Activated CD8-positive, alpha-beta T cell treated with anti-CD3 and anti-CD28 coated beads, Interleukin-2, amount 10 ng/mL, durations not matched to agents 7 days and 5 days (primary cell): ENCODE measurements at regions of chr18 and their contacts with region 1.

Region 1: GRCh38 chr18:658001-658946 is 821 bp downstream of the TYMS start:
- DNase-seq: peak; percentile 88
- ATAC-seq: peak; percentile 73
- H3K4me3 Mint-ChIP-seq: peak overlapping the region; percentile 99
- H3K27ac Mint-ChIP-seq: peak overlapping the region; percentile 94
- H3K4me1 Mint-ChIP-seq: peaks cover 52% of the 10 kb centered on the region
- H3K27me3 Mint-ChIP-seq: no peaks in the 10 kb centered on the region

Region 2: GRCh38 chr18:267688-268552 is 390.4 kb before region 1 on chr18 and contains the start of gene THOC1:
- CTCF ChIA-PET with region 1: interaction called, 3 read pairs
- POLR2A ChIA-PET with region 1: interaction called, 17 read pairs
- DNase-seq: peak; percentile 96
- ATAC-seq: peak; percentile 92
- H3K4me3 Mint-ChIP-seq: peak within 1 kb of the TSS; percentile 99
- H3K27ac Mint-ChIP-seq: peak within 1 kb of the TSS; percentile 100
- H3K4me1 Mint-ChIP-seq: peaks cover 26% of the 10 kb centered on the region
- H3K27me3 Mint-ChIP-seq: no peaks in the 10 kb centered on the region
- total RNA-seq, gene THOC1: 43.6 to 49.4 TPM

Region 3: DNA sequence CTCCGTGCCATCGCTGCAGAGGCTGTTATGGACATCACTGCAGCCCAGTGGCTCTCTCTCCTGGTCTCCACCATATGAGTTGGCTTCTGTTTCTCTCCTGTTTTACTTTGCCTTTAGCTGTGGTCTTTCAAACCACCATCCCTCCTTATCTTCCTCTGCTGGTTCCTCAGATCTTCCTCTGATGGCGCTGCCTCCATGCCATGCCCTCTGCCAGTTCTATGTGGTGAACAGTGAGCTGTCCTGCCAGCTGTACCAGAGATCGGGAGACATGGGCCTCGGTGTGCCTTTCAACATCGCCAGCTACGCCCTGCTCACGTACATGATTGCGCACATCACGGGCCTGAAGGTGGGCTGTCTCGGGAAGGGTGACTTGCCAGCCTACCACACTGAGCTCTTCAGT is 12.2 kb after region 1 on chr18:
- CTCF ChIA-PET with region 1: interaction called, 4 read pairs
- POLR2A ChIA-PET with region 1: interaction called, 13 read pairs
- DNase-seq: no peak
- ATAC-seq: no peak
- H3K4me3 Mint-ChIP-seq: no peak overlapping the region
- H3K27ac Mint-ChIP-seq: peak overlapping the region; percentile 3
- H3K4me1 Mint-ChIP-seq: peaks cover 17% of the 10 kb centered on the region
- H3K27me3 Mint-ChIP-seq: no peaks in the 10 kb centered on the region

Region 4: GRCh38 chr18:712401-713134 is 54.3 kb after region 1 on chr18 and contains the start of gene ENOSF1:
- CTCF ChIA-PET with region 1: interaction called, 9 read pairs
- POLR2A ChIA-PET with region 1: interaction called, 12 read pairs
- DNase-seq: peak; percentile 88
- ATAC-seq: peak; percentile 89
- H3K4me3 Mint-ChIP-seq: peak within 1 kb of the TSS; percentile 88
- H3K27ac Mint-ChIP-seq: peak within 1 kb of the TSS; percentile 93
- H3K4me1 Mint-ChIP-seq: peaks cover 51% of the 10 kb centered on the region
- H3K27me3 Mint-ChIP-seq: no peaks in the 10 kb centered on the region
- total RNA-seq, gene ENOSF1: 66.0 to 74.1 TPM

Region 5: GRCh38 chr18:839224-840022 is 181.1 kb after region 1 on chr18:
- CTCF ChIA-PET with region 1: interaction called, 10 read pairs
- POLR2A ChIA-PET with region 1: no interaction called
- DNase-seq: peak; percentile 93
- ATAC-seq: peak; percentile 98
- H3K4me3 Mint-ChIP-seq: no peak overlapping the region
- H3K27ac Mint-ChIP-seq: no peak overlapping the region
- H3K4me1 Mint-ChIP-seq: peaks cover 5% of the 10 kb centered on the region
- H3K27me3 Mint-ChIP-seq: peaks cover 6% of the 10 kb centered on the region